Panc1 (cell line): ENCODE measurements at regions of chr2 and their contacts with region 1.

Region 1: GRCh38 chr2:72847696-72848315 is 22.0 kb upstream of the EXOC6B start:
- DNase-seq: no peak
- ATAC-seq: no peak
- H3K4me3 ChIP-seq: no peak overlapping the region
- H3K27ac ChIP-seq: no peak overlapping the region
- H3K4me1 ChIP-seq: no peaks in the 10 kb centered on the region
- H3K27me3 ChIP-seq: peaks cover 3% of the 10 kb centered on the region; the same call in 1 of the 2 replicates
- CTCF ChIP-seq: no peak

Region 2: DNA sequence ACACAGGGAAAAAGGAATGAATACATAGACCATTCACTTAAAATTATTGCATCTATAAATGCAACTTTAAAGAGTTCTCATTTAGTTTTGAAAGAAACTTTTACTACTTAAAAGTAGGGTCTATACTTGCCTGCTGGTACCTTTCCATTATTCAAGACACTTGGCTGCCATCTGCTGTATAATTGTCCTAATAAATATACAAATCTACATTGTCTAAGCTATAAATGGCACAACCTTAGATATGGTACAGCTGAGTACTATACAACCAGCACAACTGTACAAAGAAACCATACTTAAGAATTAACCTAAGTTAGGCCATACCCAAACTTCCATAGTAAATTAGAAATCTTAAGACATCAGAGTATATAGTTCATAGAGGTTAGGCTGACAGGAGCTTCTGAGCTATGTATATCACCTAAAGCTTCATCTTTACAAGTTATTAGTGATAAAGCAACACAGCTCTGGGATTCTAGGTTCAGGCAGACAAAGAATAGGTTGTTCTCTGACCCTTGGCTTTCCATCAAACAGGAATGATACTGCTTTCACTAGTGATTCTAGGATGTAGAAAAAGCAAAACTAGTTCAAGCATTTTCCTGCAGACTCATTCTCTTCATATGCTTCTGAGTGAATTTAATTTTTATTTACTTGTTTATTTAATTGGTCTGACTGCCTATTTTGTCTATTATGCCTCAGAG is 44.0 kb before region 1 on chr2:
- CTCF ChIA-PET with region 1: no interaction called
- POLR2A ChIA-PET with region 1: no interaction called
- in situ Hi-C with region 1: no loop called
- intact Hi-C with region 1: loop called (anchors 2 kb)
- DNase-seq: no peak
- ATAC-seq: no peak
- H3K4me3 ChIP-seq: no peak overlapping the region
- H3K27ac ChIP-seq: no peak overlapping the region
- H3K4me1 ChIP-seq: peaks cover 2% of the 10 kb centered on the region; the same call in 1 of the 2 replicates
- H3K27me3 ChIP-seq: no peaks in the 10 kb centered on the region
- CTCF ChIP-seq: no peak